GM10248 (cell line): ENCODE measurements at regions of chr3 and their contacts with region 1.

Region 1: DNA sequence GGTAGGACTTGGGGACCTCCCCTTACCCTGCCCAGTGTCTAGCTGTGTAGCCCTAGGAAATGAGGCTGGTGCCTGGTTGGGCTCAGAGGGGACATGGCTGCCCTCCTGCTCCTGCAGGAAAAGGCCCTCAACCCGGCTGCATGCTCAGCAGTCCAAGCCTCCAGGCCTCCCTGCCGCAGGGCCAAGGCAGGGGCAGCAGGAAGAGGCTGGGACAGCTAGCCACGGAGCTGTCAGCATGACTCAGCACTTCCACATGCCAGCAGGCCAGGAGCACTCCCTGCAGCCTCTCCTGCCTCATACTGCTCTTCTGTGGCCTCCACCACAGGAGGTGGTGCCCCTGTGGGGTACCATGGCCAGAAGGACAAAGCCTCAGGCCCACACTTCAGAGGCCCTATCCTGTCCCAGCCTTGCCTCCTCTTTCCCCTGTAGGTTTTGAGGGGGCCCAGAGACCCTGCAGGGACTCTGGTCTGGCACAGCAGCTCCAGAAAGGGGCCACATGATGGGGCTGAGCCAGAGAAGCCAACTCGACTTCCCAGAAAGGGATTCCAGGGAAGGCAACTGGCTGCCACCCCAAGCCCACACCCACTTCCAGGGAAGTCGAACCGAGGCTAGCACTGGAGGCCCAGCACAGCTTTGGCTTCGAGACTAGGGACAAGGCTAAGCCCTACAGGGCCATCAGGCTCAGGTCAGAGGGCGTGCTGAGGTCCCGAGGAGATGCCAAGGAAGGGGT is 19.5 kb downstream of the TKT start:
- DNase-seq: no peak
- CTCF ChIP-seq: no peak

Region 2: DNA sequence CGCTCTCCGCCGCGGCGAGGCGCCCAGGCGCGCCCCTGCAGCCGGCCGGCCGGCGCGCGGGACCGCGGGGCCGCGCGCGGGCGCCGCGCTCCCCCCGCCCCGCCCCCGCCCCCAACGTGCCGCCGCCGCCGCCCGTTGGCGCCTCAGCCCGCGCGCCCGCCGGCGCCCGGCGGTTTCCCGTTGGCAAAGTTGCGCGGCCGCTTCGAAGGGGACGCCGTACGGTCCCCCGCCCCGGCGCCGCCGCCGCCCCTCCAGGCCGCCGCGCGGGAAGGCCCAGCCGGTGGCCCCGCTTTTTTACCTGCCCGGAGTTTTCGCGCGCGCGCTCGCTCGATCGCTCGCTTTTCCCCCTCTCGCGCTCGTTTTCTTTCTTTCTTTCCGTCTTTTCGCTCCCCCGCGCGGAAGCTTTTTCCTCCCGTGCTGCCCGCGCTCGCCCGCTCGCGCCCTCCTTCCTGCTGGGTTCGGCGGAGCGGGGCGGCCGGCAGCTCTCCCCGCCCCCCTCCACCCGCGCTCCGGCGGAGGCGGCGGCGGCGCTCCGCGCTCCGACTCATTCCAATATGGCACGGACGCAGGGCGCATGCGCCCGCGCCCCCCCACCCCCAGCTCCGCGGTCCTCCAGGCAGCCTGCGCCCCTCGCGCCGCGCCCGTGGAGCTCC is 190.6 kb before region 1 on chr3 and contains the start of gene SFMBT1:
- CTCF ChIA-PET with region 1: no interaction called
- POLR2A ChIA-PET with region 1: no interaction called
- DNase-seq: peak; percentile 90
- CTCF ChIP-seq: no peak

Region 3: GRCh38 chr3:53247619-53248018 is 11.3 kb after region 1 on chr3:
- CTCF ChIA-PET with region 1: interaction called, 13 read pairs
- POLR2A ChIA-PET with region 1: no interaction called
- DNase-seq: no peak
- CTCF ChIP-seq: no peak